Activated B cell treated with CpG ODN at 0.5 μM for 24 hours (primary cell): ENCODE measurements at regions of chr15 and their contacts with region 1.

Region 1: DNA sequence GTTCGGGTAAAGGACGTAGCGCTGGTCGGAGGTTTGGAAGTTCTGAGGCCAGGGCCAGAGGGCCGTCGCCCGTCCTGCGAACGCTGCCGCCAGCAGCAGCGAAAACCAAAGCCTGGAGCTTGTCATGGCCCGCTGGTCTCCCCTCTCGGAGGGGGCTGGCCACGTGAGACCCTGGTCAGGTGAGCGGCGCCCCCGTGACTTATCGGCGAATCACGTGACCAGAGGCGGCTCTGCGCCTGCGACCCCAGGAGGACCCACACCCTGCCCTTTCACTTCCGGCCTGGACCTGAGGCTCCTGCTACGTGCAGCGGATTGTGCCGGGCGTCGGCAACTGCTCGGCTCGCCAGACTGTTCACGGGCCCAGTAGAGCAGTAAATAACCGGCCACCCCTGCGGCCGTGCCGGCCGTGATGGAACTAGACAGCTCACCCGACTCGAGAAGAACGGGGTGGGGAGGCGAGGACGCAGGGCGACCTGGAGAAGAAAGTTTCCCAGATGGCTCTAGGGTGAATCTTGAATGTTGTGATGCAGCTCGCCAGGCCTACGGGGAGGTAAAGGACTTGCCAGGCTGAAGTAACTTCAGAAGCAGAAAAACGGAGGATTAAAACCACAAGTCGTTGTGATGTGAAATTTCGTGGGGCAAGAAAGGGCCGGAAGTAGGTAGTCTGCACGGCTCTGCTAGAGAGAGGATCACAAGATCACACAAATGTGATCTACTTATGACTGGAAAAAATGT is at the start of gene HEXA:
- DNase-seq: peak; percentile 99
- ATAC-seq: peak; percentile 83
- H3K4me3 Mint-ChIP-seq: peak within 1 kb of the TSS; percentile 91
- H3K27ac Mint-ChIP-seq: peak within 1 kb of the TSS; percentile 97
- H3K4me1 Mint-ChIP-seq: peaks cover 58% of the 10 kb centered on the region
- H3K27me3 Mint-ChIP-seq: no peaks in the 10 kb centered on the region
- CTCF ChIP-seq: no peak
- total RNA-seq, gene HEXA: 100 and 102 TPM in 2 replicates

Region 2: GRCh38 chr15:72272213-72273002 is 103.6 kb before region 1 on chr15 and contains the start of gene PARP6:
- CTCF ChIA-PET with region 1: no interaction called
- POLR2A ChIA-PET with region 1: interaction called, 6 read pairs
- intact Hi-C with region 1: loop called (anchors 2 kb)
- DNase-seq: peak; percentile 95
- ATAC-seq: peak; percentile 96
- H3K4me3 Mint-ChIP-seq: peak within 1 kb of the TSS; percentile 87
- H3K27ac Mint-ChIP-seq: peak within 1 kb of the TSS; percentile 86
- H3K4me1 Mint-ChIP-seq: peaks cover 36% of the 10 kb centered on the region
- H3K27me3 Mint-ChIP-seq: no peaks in the 10 kb centered on the region
- CTCF ChIP-seq: no peak
- total RNA-seq, gene PARP6: 70.7 and 81.4 TPM in 2 replicates

Region 3: DNA sequence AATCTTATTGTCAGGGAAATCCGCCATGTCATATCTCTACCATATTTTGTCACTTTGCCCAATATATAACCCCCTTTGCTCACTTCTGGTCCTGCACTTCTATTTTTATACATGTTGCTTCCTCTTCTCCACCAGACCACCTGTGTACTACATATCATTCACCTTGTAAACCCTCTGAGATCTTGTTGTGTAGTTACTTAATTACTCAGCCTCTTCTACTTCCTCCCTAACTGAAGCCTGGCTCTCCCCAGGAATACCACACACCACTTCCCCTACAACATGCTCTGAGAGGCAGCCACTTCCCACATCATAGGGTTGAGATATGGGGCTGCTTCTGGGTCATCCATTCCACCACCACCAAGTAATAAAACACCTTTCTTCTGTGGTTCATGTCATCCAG is 10.2 kb before region 1 on chr15:
- CTCF ChIA-PET with region 1: no interaction called
- POLR2A ChIA-PET with region 1: interaction called, 11 read pairs
- intact Hi-C with region 1: no loop called
- DNase-seq: no peak
- ATAC-seq: peak; percentile 54
- H3K4me3 Mint-ChIP-seq: no peak overlapping the region
- H3K27ac Mint-ChIP-seq: peak overlapping the region; percentile 20
- H3K4me1 Mint-ChIP-seq: peaks cover 55% of the 10 kb centered on the region
- H3K27me3 Mint-ChIP-seq: no peaks in the 10 kb centered on the region
- CTCF ChIP-seq: no peak

Region 4: GRCh38 chr15:72532991-72533601 is 157.1 kb after region 1 on chr15:
- CTCF ChIA-PET with region 1: no interaction called
- POLR2A ChIA-PET with region 1: no interaction called
- intact Hi-C with region 1: loop called (anchors 5 kb)
- DNase-seq: no peak
- ATAC-seq: peak; percentile 56
- H3K4me3 Mint-ChIP-seq: no peak overlapping the region
- H3K27ac Mint-ChIP-seq: no peak overlapping the region
- H3K4me1 Mint-ChIP-seq: peaks cover 5% of the 10 kb centered on the region
- H3K27me3 Mint-ChIP-seq: no peaks in the 10 kb centered on the region
- CTCF ChIP-seq: no peak

Region 5: GRCh38 chr15:73753250-73754130 is 1377.5 kb after region 1 on chr15 and contains the start of gene INSYN1:
- CTCF ChIA-PET with region 1: no interaction called
- POLR2A ChIA-PET with region 1: no interaction called
- intact Hi-C with region 1: no loop called
- DNase-seq: no peak
- ATAC-seq: no peak
- H3K4me3 Mint-ChIP-seq: peak within 1 kb of the TSS; percentile 32
- H3K27ac Mint-ChIP-seq: no peak within 1 kb of the TSS
- H3K4me1 Mint-ChIP-seq: peaks cover 2% of the 10 kb centered on the region
- H3K27me3 Mint-ChIP-seq: peaks cover 41% of the 10 kb centered on the region
- CTCF ChIP-seq: no peak
- total RNA-seq, gene INSYN1: not detected in 2 replicates